CD4-positive, alpha-beta memory T cell (primary cell): ENCODE measurements at regions of chr2 and their contacts with region 1.

Region 1: GRCh38 chr2:74529357-74530238 is at the starts of genes AUP1 and HTRA2:
- DNase-seq: peak; percentile 83 to 88 (median 86)
- H3K4me3 ChIP-seq: peak within 1 kb of the TSS; percentile 89 to 100
- H3K4me3 Mint-ChIP-seq: peak within 1 kb of the TSS; percentile 92 to 96 (median 94)
- H3K27ac ChIP-seq: peak within 1 kb of the TSS; percentile 84
- H3K27ac Mint-ChIP-seq: peak within 1 kb of the TSS; percentile 87 to 97 (median 94)
- H3K4me1 ChIP-seq: peaks cover 31% of the 10 kb centered on the region
- H3K4me1 Mint-ChIP-seq: peaks cover 19 to 50% (median 40%) of the 10 kb centered on the region in 4 donors
- H3K27me3 ChIP-seq: no peaks in the 10 kb centered on the region
- H3K27me3 Mint-ChIP-seq: no peaks in the 10 kb centered on the region
- total RNA-seq, gene AUP1: 153 to 158 TPM
- total RNA-seq, gene HTRA2: 39.8 to 41.1 TPM

Region 2: DNA sequence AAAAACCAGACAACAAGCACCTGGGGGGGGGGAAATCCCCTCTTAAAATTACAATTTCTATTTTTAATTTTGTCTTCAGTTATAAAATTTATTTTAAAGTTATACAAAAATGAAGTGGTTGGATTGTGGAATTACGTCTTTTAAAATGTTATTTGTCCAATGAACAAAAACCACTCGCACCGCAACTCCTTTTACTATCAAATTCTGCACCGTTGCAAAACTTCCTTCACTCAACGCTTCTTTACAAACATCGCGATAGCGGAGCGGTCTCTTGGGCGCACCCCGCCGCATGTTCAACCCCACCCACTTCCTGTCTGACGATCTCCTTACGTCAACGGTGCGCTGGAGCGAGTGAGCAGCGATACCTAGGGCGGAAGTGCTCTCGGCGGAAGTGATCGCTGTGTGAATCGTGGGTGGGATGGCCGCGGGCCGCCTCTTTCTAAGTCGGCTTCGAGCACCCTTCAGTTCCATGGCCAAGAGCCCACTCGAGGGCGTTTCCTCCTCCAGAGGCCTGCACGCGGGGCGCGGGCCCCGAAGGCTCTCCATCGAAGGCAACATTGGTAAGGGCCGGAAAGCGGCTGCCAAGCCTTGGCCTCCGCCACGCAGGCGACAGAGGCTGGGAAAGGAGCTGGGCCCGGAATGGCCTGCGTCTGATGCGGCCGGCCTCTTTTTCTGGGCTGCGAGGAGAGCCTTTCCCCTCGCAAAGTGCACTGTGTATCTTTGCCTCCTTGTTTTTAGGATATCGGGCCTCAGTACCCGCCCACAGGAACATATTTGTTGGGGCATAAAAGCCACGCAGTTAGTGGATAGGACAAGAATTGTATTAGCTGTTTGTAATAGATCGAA is 602.9 kb before region 1 on chr2 and contains the start of gene DGUOK:
- CTCF ChIA-PET with region 1: no interaction called
- POLR2A ChIA-PET with region 1: no interaction called
- intact Hi-C with region 1: loop called (anchors 1 kb)
- DNase-seq: peak; percentile 96 to 99 (median 98)
- H3K4me3 ChIP-seq: peak within 1 kb of the TSS; percentile 66 to 72
- H3K4me3 Mint-ChIP-seq: peak within 1 kb of the TSS; percentile 77 to 95 (median 92)
- H3K27ac ChIP-seq: peak within 1 kb of the TSS; percentile 97
- H3K27ac Mint-ChIP-seq: peak within 1 kb of the TSS; percentile 98 to 99 (median 99)
- H3K4me1 ChIP-seq: peaks cover 50% of the 10 kb centered on the region
- H3K4me1 Mint-ChIP-seq: peaks cover 38 to 55% (median 45%) of the 10 kb centered on the region in 4 donors
- H3K27me3 ChIP-seq: no peaks in the 10 kb centered on the region
- H3K27me3 Mint-ChIP-seq: no peaks in the 10 kb centered on the region
- total RNA-seq, gene DGUOK: 52.2 to 55.5 TPM

Region 3: DNA sequence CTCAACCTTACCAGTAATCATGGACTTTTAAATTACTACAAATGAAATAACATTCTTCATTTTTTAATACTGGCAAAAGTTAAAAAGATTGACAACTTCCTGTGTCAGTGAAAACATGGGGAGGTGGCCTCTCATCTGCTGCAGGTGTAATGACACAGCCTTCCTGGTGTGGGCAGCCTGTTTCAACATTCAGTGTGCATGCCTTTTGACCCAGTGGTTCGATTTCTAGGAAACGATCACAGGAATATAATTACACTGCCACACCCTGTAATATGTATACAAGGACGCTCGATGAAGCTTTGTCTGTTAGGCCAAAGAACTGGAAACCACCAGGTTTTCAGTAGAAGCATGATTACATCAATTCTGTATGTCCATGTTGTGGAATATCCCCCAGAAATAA is 262.5 kb before region 1 on chr2:
- CTCF ChIA-PET with region 1: no interaction called
- POLR2A ChIA-PET with region 1: no interaction called
- intact Hi-C with region 1: loop called (anchors 5 kb)
- DNase-seq: peak; percentile 66 to 73 (median 70)
- H3K4me3 ChIP-seq: no peak overlapping the region
- H3K4me3 Mint-ChIP-seq: peak overlapping the region; percentile 11 to 77 (median 65)
- H3K27ac ChIP-seq: no peak overlapping the region
- H3K27ac Mint-ChIP-seq: peak overlapping the region in 6 of 7 donors; percentile 14 to 81 (median 70)
- H3K4me1 ChIP-seq: peaks cover 20% of the 10 kb centered on the region
- H3K4me1 Mint-ChIP-seq: peaks cover 14 to 23% (median 18%) of the 10 kb centered on the region in 4 donors
- H3K27me3 ChIP-seq: no peaks in the 10 kb centered on the region
- H3K27me3 Mint-ChIP-seq: no peaks in the 10 kb centered on the region

Region 4: GRCh38 chr2:74421221-74421870 is 108.3 kb before region 1 on chr2 and contains the starts of genes C2orf81 and WDR54:
- CTCF ChIA-PET with region 1: interaction called, 5 read pairs
- POLR2A ChIA-PET with region 1: interaction called, 9 read pairs
- intact Hi-C with region 1: loop called (anchors 1 kb)
- DNase-seq: peak; percentile 91 to 96 (median 95)
- H3K4me3 ChIP-seq: peak within 1 kb of the TSS; percentile 76 to 88
- H3K4me3 Mint-ChIP-seq: peak within 1 kb of the TSS; percentile 96 to 100 (median 98)
- H3K27ac ChIP-seq: peak within 1 kb of the TSS; percentile 93
- H3K27ac Mint-ChIP-seq: peak within 1 kb of the TSS; percentile 88 to 100 (median 99)
- H3K4me1 ChIP-seq: peaks cover 11% of the 10 kb centered on the region
- H3K4me1 Mint-ChIP-seq: peaks cover 12 to 30% (median 21%) of the 10 kb centered on the region in 4 donors
- H3K27me3 ChIP-seq: no peaks in the 10 kb centered on the region
- H3K27me3 Mint-ChIP-seq: no peaks in the 10 kb centered on the region
- total RNA-seq, gene C2orf81: 5.3 to 7.5 TPM
- total RNA-seq, gene WDR54: 36.3 to 41.0 TPM

Region 5: DNA sequence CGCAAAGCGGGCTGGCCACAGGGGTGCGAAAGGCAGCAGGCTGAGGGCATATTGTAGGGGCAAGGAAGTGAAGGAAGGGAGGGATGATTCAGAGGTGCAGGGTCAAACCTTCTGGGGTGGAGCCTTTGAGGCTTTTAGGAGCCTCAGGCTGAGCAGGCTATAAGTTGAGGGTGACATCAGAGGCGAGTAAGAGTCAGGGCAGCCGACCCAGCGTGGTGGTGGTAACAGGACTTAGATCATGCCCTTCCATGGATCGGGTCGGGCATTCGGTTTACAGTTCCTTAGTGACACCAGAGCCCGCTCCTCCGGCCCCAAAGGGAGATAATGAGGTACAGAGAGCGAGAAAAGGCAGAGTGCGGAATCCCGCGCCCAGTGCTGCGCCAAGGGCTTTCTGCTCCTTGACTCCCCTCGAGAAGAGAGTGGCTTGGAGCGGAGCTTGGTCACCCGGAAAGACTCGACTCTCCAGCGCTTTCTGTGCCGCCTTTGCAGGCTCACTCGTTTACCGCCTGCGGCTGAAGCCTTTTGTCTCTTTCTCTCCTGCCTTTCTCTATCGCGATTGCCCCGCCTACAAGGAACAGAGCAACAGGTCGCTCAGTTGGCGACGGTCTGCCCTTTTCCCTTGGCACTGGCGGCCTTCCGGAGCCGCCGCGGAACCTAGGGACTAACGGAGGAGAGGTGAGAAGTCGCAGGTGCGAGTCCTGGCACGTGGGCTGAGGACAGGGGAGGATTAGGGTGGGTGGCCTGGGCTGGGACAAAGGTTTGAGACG is 30.9 kb before region 1 on chr2:
- CTCF ChIA-PET with region 1: interaction called, 17 read pairs
- POLR2A ChIA-PET with region 1: interaction called, 26 read pairs
- intact Hi-C with region 1: no loop called
- DNase-seq: peak in 3 of 5 donors; percentile 14 to 29 (median 19)
- H3K4me3 ChIP-seq: peak overlapping the region; percentile 52 to 64
- H3K4me3 Mint-ChIP-seq: peak overlapping the region; percentile 78 to 96 (median 89)
- H3K27ac ChIP-seq: no peak overlapping the region
- H3K27ac Mint-ChIP-seq: peak overlapping the region in 4 of 7 donors; percentile 32 to 63 (median 43)
- H3K4me1 ChIP-seq: peaks cover 36% of the 10 kb centered on the region
- H3K4me1 Mint-ChIP-seq: peaks cover 10 to 56% (median 34%) of the 10 kb centered on the region in 4 donors
- H3K27me3 ChIP-seq: peaks cover 31% of the 10 kb centered on the region
- H3K27me3 Mint-ChIP-seq: peaks cover 15 to 45% of the 10 kb centered on the region in 2 donors

Region 6: GRCh38 chr2:74515981-74516633 is 13.5 kb before region 1 on chr2:
- CTCF ChIA-PET with region 1: interaction called, 3 read pairs
- POLR2A ChIA-PET with region 1: interaction called, 20 read pairs
- intact Hi-C with region 1: no loop called
- DNase-seq: peak; percentile 71 to 76 (median 73)
- H3K4me3 ChIP-seq: peak overlapping the region in 1 of 2 donors; percentile 53
- H3K4me3 Mint-ChIP-seq: peak overlapping the region; percentile 71 to 87 (median 83)
- H3K27ac ChIP-seq: no peak overlapping the region
- H3K27ac Mint-ChIP-seq: no peak overlapping the region
- H3K4me1 ChIP-seq: peaks cover 35% of the 10 kb centered on the region
- H3K4me1 Mint-ChIP-seq: peaks cover 6 to 36% (median 18%) of the 10 kb centered on the region in 4 donors
- H3K27me3 ChIP-seq: peaks cover 35% of the 10 kb centered on the region
- H3K27me3 Mint-ChIP-seq: peaks cover 40 to 53% of the 10 kb centered on the region in 2 donors

Region 7: DNA sequence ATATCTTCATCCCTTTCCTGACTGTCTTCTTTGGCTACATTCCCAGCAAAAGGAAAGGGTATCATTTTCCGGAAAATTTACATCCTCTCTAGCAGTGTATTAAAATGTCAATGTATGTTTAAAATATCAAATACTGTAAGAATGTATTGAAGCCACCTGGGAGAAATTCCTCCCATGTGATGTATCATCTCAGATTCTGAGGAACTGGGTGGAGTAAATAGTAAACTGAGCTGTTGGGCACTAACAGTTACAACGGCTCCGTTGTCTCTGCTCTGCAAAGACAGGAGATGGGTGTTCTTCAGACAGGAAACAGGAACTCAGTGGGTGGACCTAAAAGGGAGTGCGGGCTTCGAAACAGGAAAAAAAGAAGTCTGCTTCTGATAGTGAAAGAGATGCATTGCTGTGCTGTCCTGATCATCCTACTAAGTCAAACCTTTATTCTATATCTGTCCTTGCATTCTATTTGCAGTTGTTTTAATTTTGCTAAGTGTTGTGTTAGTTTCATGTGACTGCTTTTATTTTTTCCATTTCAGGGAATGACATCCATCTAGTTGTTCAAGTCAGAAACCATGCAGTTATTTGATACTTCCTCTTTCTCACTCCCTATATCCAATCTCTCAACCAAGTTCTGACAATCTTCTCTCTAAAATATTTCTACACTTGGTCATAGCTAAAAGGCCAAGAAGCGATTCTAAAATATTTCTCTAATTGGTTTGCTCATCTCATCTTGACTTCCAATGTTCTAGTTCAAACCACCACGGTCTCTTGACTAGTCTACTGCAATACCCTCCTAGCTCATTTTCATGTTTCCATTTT is 44.4 kb after region 1 on chr2:
- CTCF ChIA-PET with region 1: no interaction called
- POLR2A ChIA-PET with region 1: interaction called, 13 read pairs
- intact Hi-C with region 1: no loop called
- DNase-seq: peak in 4 of 5 donors; percentile 25 to 37 (median 30)
- H3K4me3 ChIP-seq: peak overlapping the region in 1 of 2 donors; percentile 42
- H3K4me3 Mint-ChIP-seq: peak overlapping the region; percentile 12 to 87 (median 78)
- H3K27ac ChIP-seq: no peak overlapping the region
- H3K27ac Mint-ChIP-seq: peak overlapping the region; percentile 58 to 83 (median 80)
- H3K4me1 ChIP-seq: peaks cover 15% of the 10 kb centered on the region
- H3K4me1 Mint-ChIP-seq: peaks cover 13 to 17% (median 14%) of the 10 kb centered on the region in 4 donors
- H3K27me3 ChIP-seq: no peaks in the 10 kb centered on the region
- H3K27me3 Mint-ChIP-seq: peaks cover 0 to 10% of the 10 kb centered on the region in 2 donors